PC-3 (cell line): ENCODE measurements at regions of chr7 and their contacts with region 1.

Region 1: DNA sequence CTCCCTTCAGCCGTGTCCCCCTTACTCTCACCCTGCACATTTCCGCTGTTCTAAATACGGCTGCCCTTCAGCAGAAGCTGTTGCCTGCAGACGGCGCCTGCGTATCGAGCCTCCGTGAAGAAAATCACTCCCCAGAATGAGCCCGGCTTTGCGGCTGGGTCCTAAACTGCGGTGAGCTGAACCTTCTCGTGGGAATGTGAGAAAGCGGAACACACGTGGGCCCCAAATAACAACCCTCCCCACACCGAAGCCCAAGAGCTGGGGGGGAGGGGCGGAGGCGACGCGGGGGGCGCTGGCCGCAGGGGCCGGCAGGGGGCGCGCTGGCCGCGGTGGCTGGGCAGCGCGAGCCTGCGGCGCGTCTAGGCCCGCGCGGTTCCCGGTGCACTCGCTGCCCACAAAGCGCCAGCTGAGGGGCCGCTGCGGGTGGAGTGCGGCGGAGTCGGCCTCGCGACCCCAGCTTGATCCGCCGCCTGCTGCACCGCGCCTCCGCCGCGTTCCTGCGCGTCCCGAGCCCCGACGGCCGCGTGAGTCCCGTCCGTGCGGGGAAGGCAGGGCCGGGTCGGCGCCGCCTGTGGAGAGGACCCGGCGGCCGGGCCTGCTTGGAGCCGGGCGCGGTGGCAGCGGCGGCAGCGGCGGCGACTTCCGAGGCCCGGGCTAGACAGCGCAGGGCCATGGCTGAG is at the start of gene ZNF398:
- DNase-seq: peak; percentile 74
- ATAC-seq: peak; percentile 71
- H3K4me3 ChIP-seq: peak within 1 kb of the TSS; percentile 92
- H3K27ac ChIP-seq: peak within 1 kb of the TSS; percentile 68
- H3K4me1 ChIP-seq: peaks cover 35% of the 10 kb centered on the region
- H3K27me3 ChIP-seq: no peaks in the 10 kb centered on the region
- CTCF ChIP-seq: peak; percentile 59
- total RNA-seq, gene ZNF398: 8.2 and 9.1 TPM in 2 replicates

Region 2: DNA sequence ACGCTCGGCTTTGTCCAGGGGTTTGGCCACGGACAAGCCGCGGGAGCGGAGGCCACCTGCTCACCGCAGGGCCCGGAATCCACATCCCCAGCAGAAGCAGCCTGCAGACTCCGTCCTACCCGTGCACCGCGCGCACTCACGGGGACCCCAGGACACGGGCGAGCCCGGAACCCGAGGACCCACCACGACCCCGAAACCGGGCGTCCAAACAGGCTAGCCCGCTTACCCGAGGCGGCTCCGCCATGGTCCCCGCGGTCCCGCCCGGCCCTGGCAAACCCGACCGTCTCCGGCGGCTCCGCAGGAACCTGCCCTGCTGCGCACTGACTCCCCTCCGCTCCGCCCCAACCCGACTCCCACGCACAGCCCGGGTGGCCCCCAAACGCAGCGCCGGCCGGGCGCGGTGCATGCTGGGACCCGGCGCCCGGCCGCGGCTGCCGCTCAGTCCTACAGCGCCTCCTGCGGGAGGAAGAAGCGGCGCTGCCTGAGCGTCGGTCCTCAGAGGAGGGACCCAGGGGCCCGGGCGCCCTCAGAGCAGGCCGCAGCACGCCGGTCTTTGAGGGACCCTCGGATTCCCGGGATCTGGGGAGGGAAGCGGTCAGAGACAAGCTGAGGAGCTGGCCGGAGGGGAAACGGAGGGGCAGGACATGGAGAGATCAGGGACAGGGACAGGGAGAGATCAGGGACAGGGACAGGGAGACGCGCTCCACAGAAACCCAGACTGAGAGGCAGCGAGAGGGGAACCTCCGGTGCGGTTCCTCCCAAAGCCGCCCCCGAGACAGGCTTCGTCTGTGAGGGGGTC is 56.6 kb before region 1 on chr7 and contains the start of gene ZNF786:
- CTCF ChIA-PET with region 1: interaction called, 3 read pairs
- POLR2A ChIA-PET with region 1: no interaction called
- intact Hi-C with region 1: loop called (anchors 2 kb)
- DNase-seq: peak; percentile 90
- ATAC-seq: peak; percentile 85
- H3K4me3 ChIP-seq: peak within 1 kb of the TSS; percentile 97
- H3K27ac ChIP-seq: peak within 1 kb of the TSS; percentile 69
- H3K4me1 ChIP-seq: no peaks in the 10 kb centered on the region
- H3K27me3 ChIP-seq: no peaks in the 10 kb centered on the region
- CTCF ChIP-seq: peak; percentile 80
- total RNA-seq, gene ZNF786: 4.2 and 6.3 TPM in 2 replicates

Region 3: GRCh38 chr7:149125863-149126661 is 21.1 kb before region 1 on chr7 and contains the start of gene ZNF425:
- CTCF ChIA-PET with region 1: no interaction called
- POLR2A ChIA-PET with region 1: no interaction called
- intact Hi-C with region 1: loop called (anchors 1 kb)
- DNase-seq: peak; percentile 94
- ATAC-seq: peak; percentile 83
- H3K4me3 ChIP-seq: peak within 1 kb of the TSS; percentile 100
- H3K27ac ChIP-seq: peak within 1 kb of the TSS; percentile 57
- H3K4me1 ChIP-seq: peaks cover 5% of the 10 kb centered on the region
- H3K27me3 ChIP-seq: no peaks in the 10 kb centered on the region
- CTCF ChIP-seq: peak; percentile 82
- total RNA-seq, gene ZNF425: 1.6 and 2.0 TPM in 2 replicates

Region 4: DNA sequence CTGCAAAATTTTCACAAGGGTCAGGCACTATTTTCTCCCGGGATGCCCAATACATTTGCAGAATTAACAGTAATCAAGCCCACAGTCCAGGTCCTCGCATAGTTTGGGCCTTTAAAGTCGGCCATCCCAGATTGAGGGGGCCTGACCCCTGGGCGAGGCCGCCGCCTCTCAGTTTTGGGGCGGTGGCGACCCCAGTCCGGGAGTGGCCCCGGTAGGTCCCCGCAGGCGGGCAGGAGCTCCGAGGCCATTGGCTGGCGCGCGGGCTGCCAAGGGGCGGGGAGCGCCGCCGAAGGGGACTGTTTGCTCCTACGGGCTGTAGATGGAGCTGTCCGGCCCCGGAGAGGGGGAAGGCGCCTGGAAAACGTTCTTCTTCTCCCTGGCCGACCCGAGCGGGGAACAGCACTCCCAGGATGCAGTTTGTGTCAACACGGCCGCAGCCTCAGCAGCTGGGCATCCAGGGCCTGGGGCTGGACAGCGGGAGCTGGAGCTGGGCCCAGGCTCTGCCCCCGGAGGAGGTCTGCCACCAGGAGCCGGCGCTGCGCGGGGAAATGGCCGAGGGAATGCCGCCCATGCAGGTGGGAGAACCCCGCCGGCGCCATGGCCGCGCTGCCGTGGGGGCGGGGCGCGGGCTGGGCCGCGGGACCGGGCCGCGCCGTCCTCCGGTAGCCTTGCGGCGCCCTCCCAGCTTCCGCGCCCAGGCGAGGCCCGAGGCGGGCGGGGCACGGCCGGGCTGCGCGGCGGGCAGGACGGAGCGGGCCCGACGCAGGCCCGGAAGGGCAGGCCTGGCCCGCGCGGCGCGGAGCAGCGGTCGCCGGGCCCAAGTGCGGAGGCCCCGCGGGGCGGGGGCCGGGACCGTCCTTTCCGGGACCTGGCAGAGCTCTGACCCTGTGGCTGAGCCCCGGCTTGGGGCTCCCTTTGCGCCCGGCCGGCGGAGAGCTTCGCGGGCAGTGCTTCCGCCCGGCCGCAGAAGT is 48.3 kb after region 1 on chr7 and contains the start of gene ZNF282:
- CTCF ChIA-PET with region 1: no interaction called
- POLR2A ChIA-PET with region 1: interaction called, 3 read pairs
- intact Hi-C with region 1: loop called (anchors 2 kb)
- DNase-seq: peak; percentile 89
- ATAC-seq: peak; percentile 89
- H3K4me3 ChIP-seq: peak within 1 kb of the TSS; percentile 92
- H3K27ac ChIP-seq: peak within 1 kb of the TSS; percentile 66
- H3K4me1 ChIP-seq: peaks cover 37% of the 10 kb centered on the region
- H3K27me3 ChIP-seq: no peaks in the 10 kb centered on the region
- CTCF ChIP-seq: peak; percentile 68
- total RNA-seq, gene ZNF282: 31.4 and 39.7 TPM in 2 replicates

Region 5: GRCh38 chr7:149229526-149229925 is 82.3 kb after region 1 on chr7:
- CTCF ChIA-PET with region 1: interaction called, 3 read pairs
- POLR2A ChIA-PET with region 1: no interaction called
- intact Hi-C with region 1: loop called (anchors 2 kb)
- DNase-seq: no peak
- ATAC-seq: no peak
- H3K4me3 ChIP-seq: no peak overlapping the region
- H3K27ac ChIP-seq: no peak overlapping the region
- H3K4me1 ChIP-seq: peaks cover 24% of the 10 kb centered on the region
- H3K27me3 ChIP-seq: no peaks in the 10 kb centered on the region
- CTCF ChIP-seq: no peak

Region 6: GRCh38 chr7:150311711-150312110 is 1164.5 kb after region 1 on chr7:
- CTCF ChIA-PET with region 1: no interaction called
- POLR2A ChIA-PET with region 1: no interaction called
- intact Hi-C with region 1: no loop called
- DNase-seq: no peak
- ATAC-seq: no peak
- H3K4me3 ChIP-seq: no peak overlapping the region
- H3K27ac ChIP-seq: no peak overlapping the region
- H3K4me1 ChIP-seq: no peaks in the 10 kb centered on the region
- H3K27me3 ChIP-seq: no peaks in the 10 kb centered on the region
- CTCF ChIP-seq: no peak